Stomach (tissue), 19 donors: ENCODE measurements at regions of chr6 and their contacts with region 1.

Region 1: GRCh38 chr6:118649918-118650581 is 1.3 kb downstream of the CEP85L start:
- DNase-seq: peak in 1 of 2 donors; percentile 87
- H3K4me3 ChIP-seq: peak overlapping the region; percentile 79 to 96 (median 92)
- H3K27ac ChIP-seq: peak overlapping the region; percentile 97 to 99 (median 98)
- H3K4me1 ChIP-seq: peaks cover 12 to 51% (median 39%) of the 10 kb centered on the region in 4 donors
- H3K27me3 ChIP-seq: no peaks in the 10 kb centered on the region
- CTCF ChIP-seq: no peak
- EP300 ChIP-seq: no peak
- POLR2A ChIP-seq: no peak

Region 2: DNA sequence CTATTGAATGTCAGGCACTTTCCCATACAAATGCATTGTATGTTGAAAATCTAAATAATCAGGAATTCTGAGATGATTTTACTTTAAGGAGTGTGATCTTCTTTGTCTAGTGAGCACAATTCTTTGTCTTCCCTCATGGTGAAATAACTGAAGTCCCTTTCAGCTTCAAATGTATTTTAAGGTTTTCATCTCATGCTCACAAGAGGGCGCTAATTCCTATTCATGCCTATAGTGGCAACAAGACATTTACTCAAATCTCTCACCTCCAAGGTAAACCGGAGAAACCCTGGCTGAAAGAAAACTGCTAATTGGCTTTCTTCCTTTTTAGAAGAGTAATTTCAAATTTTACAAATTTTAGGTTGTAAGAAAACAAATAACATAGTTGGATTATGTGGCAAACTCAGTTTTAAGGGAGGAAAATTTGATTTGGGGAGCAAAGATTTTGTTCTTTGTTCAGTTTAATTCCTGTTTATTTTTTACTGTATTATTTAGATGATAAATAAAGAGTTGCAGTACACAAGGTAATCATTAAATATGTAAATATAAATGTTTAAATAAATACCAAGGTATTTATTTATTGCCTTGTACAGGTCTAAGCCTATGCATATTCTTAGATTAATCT is 673.9 kb before region 1 on chr6:
- intact Hi-C with region 1: no loop called
- DNase-seq: peak in 1 of 2 donors; percentile 74
- H3K4me3 ChIP-seq: no peak overlapping the region
- H3K27ac ChIP-seq: no peak overlapping the region
- H3K4me1 ChIP-seq: no peaks in the 10 kb centered on the region
- H3K27me3 ChIP-seq: no peaks in the 10 kb centered on the region
- CTCF ChIP-seq: peak in 4 of 7 experiments; percentile 24 to 50 (median 33)
- EP300 ChIP-seq: no peak
- POLR2A ChIP-seq: no peak

Region 3: GRCh38 chr6:118776607-118777549 is 126.8 kb after region 1 on chr6:
- intact Hi-C with region 1: loop called (anchors 10 kb)
- DNase-seq: peak; percentile 78 to 88
- H3K4me3 ChIP-seq: no peak overlapping the region
- H3K27ac ChIP-seq: no peak overlapping the region
- H3K4me1 ChIP-seq: peaks cover 0 to 13% (median 8%) of the 10 kb centered on the region in 4 donors
- H3K27me3 ChIP-seq: no peaks in the 10 kb centered on the region
- CTCF ChIP-seq: peak in 5 of 7 experiments; percentile 52 to 83 (median 75)
- EP300 ChIP-seq: no peak
- POLR2A ChIP-seq: no peak